Left lung (tissue), 14 donors: ENCODE measurements at regions of chr6 and their contacts with region 1.

Region 1: DNA sequence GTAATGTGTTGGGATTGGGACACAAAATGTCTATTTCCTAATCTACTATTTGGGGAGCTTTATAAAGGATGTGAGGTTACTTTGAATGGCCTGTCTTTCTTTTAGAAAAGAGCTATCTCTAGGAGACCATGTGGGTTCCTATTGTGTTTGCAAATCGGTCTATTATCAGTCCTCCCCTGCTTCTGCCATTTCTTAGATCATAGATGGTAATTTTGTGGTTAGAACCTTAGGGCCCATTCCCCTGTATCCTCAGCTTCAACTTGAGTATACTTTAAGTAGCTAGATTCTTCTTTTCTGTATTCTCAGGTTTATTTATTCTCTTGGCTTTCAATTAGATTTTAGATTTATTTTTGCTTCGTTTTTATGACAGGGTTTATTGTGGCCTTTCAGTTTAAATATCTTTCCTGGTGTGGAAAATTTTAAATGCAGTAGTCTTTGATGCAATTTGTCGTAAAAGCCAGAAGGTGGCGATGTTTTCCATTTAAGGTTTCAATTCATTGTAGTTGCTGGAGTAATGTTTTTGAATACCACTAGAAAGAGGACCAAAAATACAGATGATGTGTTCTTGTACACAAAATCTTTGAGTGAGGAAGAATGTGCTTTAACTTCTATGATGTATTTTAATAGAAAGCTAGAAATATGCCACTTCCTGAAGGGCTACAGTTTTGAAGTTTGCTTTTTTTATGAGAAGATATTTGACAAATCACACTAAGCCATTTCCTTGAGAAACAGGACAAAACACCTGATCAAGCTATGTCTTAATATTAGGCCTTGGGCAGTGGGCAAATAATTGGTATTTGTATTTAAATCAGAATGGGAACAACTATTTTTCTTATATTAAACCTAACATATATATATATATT is 20.3 kb downstream of the TBPL1 start:
- DNase-seq: peak in 2 of 4 donors; percentile 27 to 59
- ATAC-seq: peak; percentile 61
- H3K4me3 ChIP-seq: no peak overlapping the region
- H3K27ac ChIP-seq: no peak overlapping the region
- H3K4me1 ChIP-seq: peaks cover 0 to 7% of the 10 kb centered on the region in 2 donors
- H3K27me3 ChIP-seq: no peaks in the 10 kb centered on the region
- CTCF ChIP-seq: peak; percentile 69

Region 2: GRCh38 chr6:134063966-134064445 is 90.7 kb after region 1 on chr6:
- intact Hi-C with region 1: loop called in 1 of 2 experiments (anchors 5 kb)
- DNase-seq: peak in 2 of 4 donors; percentile 59 to 77
- ATAC-seq: peak; percentile 98
- H3K4me3 ChIP-seq: no peak overlapping the region
- H3K27ac ChIP-seq: no peak overlapping the region
- H3K4me1 ChIP-seq: peaks cover 3 to 4% of the 10 kb centered on the region in 2 donors
- H3K27me3 ChIP-seq: no peaks in the 10 kb centered on the region
- CTCF ChIP-seq: peak; percentile 68 to 78

Region 3: DNA sequence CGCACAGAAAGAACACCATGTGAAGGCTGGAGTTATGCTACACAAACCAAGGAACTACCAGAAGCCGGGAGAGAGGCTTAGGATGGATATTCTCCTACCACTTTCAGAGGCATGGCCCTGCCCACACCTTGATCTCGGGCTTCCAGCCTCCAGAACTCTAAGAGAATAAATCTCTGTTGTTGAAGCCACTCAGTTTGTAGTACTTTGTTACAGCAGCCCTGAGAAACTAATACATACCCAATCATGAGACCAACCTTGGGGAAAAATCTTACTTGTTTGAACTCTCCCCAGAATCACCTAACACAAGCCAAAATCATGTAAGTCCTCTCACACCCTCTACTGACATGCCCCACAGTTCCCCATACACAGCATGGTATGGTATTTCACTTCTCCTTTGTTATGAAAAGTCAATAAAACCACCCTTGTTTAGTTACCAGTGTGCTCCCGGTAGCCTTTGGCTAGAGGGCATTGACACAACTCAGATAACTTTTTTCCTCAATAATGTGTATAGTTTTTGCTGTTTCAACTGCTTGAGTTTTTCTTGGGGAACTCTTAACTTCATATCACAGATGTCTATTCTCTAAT is 119.8 kb after region 1 on chr6:
- intact Hi-C with region 1: no loop called
- DNase-seq: no peak
- ATAC-seq: no peak
- H3K4me3 ChIP-seq: no peak overlapping the region
- H3K27ac ChIP-seq: no peak overlapping the region
- H3K4me1 ChIP-seq: no peaks in the 10 kb centered on the region
- H3K27me3 ChIP-seq: peaks cover 0 to 2% of the 10 kb centered on the region in 2 donors
- CTCF ChIP-seq: no peak